Gastrocnemius medialis (tissue), 4 donors: ENCODE measurements at regions of chr4 and their contacts with region 1.

Region 1: GRCh38 chr4:153221783-153222706 is 17.8 kb downstream of the TRIM2 start:
- DNase-seq: peak; percentile 18 to 35
- ATAC-seq: peak; percentile 66 to 68
- H3K4me3 ChIP-seq: peak overlapping the region; percentile 65 to 79 (median 74)
- H3K27ac ChIP-seq: peak overlapping the region; percentile 85 to 90 (median 86)
- H3K4me1 ChIP-seq: peaks cover 8 to 12% of the 10 kb centered on the region in 2 donors
- H3K27me3 ChIP-seq: no peaks in the 10 kb centered on the region
- CTCF ChIP-seq: no peak
- POLR2A ChIP-seq: peak; percentile 19 to 23

Region 2: DNA sequence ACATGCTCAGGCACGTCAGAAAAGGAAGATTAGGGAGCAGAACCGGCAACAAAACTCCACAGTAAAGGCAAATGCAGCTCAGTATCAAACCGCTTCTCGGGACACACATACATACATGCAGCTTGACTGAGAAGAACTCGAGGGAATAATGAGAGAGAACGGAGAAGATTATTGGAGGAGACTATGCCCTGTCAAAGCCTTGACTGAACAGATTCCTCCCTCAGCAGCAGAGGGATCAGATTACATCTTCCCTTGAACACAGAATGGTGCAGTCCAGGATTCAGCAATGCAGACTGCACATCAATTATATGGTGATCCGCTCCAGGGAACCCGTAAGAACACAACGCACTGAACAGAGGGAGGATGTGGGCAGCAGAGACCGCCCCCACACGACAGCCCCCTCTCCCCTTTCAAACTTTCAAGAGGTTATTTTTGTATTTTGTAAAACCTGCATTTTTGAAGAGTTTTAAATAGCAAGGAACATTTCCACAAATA is 869.4 kb before region 1 on chr4:
- in situ Hi-C with region 1: no loop called
- intact Hi-C with region 1: loop called (anchors 5 kb)
- DNase-seq: peak; percentile 58 to 61
- ATAC-seq: peak; percentile 100
- H3K4me3 ChIP-seq: peak overlapping the region; percentile 30 to 59 (median 52)
- H3K27ac ChIP-seq: peak overlapping the region; percentile 68 to 77 (median 73)
- H3K4me1 ChIP-seq: peaks cover 21 to 33% of the 10 kb centered on the region in 2 donors
- H3K27me3 ChIP-seq: no peaks in the 10 kb centered on the region
- CTCF ChIP-seq: no peak
- POLR2A ChIP-seq: peak in 1 of 2 donors; percentile 47

Region 3: DNA sequence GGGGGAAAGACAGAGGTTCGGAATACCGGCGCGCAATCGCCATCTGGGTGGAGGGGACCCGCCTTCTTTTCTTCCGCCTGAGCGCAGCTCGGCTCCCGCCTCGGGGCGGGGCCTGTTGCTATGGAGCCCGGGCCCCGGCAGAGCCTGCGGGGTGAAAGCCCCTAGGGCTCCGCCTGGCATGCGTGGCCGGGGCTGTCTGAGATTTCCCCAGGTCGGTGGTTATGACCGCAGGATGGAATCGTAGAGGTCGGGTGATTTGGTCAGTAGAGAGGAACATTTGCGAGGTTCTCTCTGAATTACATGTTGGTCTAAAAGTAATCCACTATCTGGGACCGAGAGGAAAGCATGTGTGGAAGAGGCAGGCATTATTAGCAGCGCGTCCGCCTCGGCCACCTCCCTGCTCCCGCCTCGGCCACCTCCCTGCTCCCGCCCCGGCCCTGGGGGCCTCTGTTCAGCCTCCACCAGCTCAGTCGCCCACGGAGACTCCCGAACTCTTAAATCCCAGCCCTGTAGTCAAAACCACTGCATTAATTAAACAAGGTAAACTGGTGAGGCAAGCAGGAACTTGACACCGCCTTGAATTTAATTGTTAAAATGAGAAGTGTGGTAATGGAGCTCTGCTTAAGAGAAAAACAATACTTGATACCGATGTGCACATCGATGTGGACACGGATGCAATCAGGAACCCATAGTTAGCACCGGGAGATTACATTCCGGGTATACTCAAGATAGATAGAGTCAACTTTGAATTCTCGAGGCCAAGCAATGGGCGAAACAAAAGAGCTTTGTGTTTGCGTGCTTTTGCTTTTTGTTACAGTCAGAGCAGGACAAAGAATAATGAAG is 27.4 kb after region 1 on chr4:
- in situ Hi-C with region 1: no loop called
- intact Hi-C with region 1: loop called (anchors 2 kb)
- DNase-seq: peak in 1 of 2 donors; percentile 18
- ATAC-seq: peak; percentile 79 to 83
- H3K4me3 ChIP-seq: peak overlapping the region; percentile 47 to 76 (median 66)
- H3K27ac ChIP-seq: peak overlapping the region in 3 of 4 donors; percentile 5 to 44 (median 34)
- H3K4me1 ChIP-seq: peaks cover 6 to 8% of the 10 kb centered on the region in 2 donors
- H3K27me3 ChIP-seq: no peaks in the 10 kb centered on the region
- CTCF ChIP-seq: no peak
- POLR2A ChIP-seq: no peak

Region 4: DNA sequence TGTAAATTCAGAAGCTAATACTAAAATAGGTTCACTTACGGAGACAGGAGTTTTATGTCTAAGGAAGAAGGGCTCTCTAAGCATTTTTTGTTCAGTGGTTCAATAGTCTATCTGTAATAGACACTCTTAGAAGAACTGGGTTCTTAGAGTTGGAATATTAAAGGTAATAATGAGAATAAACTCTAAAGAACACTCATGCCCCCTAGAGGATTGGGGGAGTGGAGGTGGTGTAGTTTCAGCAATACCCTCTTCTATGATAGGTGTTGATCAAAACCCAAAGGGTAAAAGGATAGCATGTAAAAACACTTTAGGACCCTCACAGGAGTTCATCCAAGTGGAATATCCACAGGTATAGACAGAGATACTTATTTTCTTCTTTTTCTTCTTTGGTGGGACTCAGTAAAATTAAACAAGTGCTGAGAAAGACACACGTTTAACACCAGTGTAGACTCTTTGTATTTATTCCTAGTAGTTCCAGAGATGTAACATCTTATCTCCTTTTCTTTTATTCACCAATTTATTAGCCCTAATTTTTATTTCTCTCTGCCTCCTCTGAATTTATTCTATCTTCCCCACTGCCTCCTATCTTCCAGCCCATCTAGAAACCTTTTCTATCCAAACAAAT is 96.8 kb after region 1 on chr4:
- in situ Hi-C with region 1: loop called in 1 of 4 experiments (anchors 25 kb)
- intact Hi-C with region 1: no loop called
- DNase-seq: no peak
- ATAC-seq: peak in 1 of 2 donors; percentile 44
- H3K4me3 ChIP-seq: no peak overlapping the region
- H3K27ac ChIP-seq: no peak overlapping the region
- H3K4me1 ChIP-seq: no peaks in the 10 kb centered on the region
- H3K27me3 ChIP-seq: no peaks in the 10 kb centered on the region
- CTCF ChIP-seq: peak; percentile 30 to 65 (median 47)
- POLR2A ChIP-seq: no peak

Region 5: DNA sequence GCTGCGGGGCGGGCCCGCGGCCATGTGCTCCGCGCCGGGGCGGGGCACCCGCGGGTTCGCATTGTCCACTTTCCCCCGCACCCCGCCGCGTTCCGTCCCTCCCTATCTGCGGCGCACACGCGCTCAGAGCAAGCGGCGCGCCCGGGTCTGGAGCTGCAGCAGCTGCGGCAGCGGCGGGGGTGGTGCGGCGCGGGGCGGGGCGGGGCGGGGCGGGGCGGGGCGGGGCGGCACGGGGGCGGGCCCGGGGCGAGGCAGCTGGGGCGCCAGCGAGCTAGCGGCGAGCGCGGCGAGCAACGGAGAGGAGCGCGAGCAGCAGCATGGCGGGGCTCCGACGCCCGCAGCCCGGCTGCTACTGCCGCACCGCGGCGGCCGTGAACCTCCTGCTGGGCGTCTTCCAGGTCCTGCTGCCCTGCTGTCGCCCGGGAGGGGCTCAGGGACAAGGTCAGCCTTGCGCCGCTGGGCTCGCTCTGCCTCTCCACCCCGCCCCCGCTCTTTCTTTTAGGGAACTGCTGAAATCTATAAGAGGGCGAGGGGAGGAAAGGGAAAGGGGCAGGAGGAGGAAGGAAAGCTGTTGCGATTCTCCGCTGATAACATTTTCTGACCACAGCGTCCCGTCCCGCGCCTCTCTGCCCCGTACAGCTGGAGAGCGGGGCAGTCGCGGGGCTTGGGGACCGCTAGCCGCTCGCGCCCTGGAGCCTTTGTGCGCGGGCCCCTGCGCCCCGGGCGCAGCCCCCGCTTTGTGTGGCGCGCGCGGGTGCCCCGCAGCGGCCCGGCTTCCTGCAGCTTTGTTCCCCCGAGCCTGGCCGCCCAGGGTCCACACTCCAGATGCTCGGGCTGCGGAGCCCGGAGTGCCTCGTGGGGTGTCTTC is 244.3 kb after region 1 on chr4 and contains the start of gene TMEM131L:
- in situ Hi-C with region 1: no loop called
- intact Hi-C with region 1: loop called (anchors 10 kb)
- DNase-seq: peak; percentile 61 to 72
- ATAC-seq: peak; percentile 52 to 59
- H3K4me3 ChIP-seq: peak within 1 kb of the TSS; percentile 72 to 95 (median 86)
- H3K27ac ChIP-seq: peak within 1 kb of the TSS; percentile 88 to 98 (median 92)
- H3K4me1 ChIP-seq: peaks cover 56 to 59% of the 10 kb centered on the region in 2 donors
- H3K27me3 ChIP-seq: no peaks in the 10 kb centered on the region
- CTCF ChIP-seq: peak in 1 of 5 experiments; percentile 4
- POLR2A ChIP-seq: peak; percentile 81 to 93
- total RNA-seq, gene TMEM131L: 4.6 to 21.4 (median 9.5) TPM

Region 6: GRCh38 chr4:153603258-153603657 is 381.2 kb after region 1 on chr4:
- in situ Hi-C with region 1: no loop called
- intact Hi-C with region 1: no loop called
- DNase-seq: no peak
- ATAC-seq: no peak
- H3K4me3 ChIP-seq: no peak overlapping the region
- H3K27ac ChIP-seq: peak overlapping the region in 1 of 4 donors; percentile 13
- H3K4me1 ChIP-seq: peaks cover 8 to 23% of the 10 kb centered on the region in 2 donors
- H3K27me3 ChIP-seq: no peaks in the 10 kb centered on the region
- CTCF ChIP-seq: no peak
- POLR2A ChIP-seq: no peak